Mammary epithelial cell (primary cell): ENCODE measurements at regions of chr4 and their contacts with region 1.

Region 1: GRCh38 chr4:169069972-169070902 is 60.2 kb upstream of the CBR4 start:
- DNase-seq: peak; percentile 99
- H3K4me3 ChIP-seq: peak overlapping the region; percentile 11 to 18 (median 12)
- H3K27ac ChIP-seq: peak overlapping the region; percentile 94
- H3K4me1 ChIP-seq: peaks cover 41% of the 10 kb centered on the region
- H3K27me3 ChIP-seq: no peaks in the 10 kb centered on the region
- CTCF ChIP-seq: no peak

Region 2: GRCh38 chr4:168797176-168797575 is 273.1 kb before region 1 on chr4:
- CTCF ChIA-PET with region 1: no interaction called
- dilution Hi-C with region 1: no loop called
- in situ Hi-C with region 1: no loop called
- intact Hi-C with region 1: no loop called
- DNase-seq: peak; percentile 84
- H3K4me3 ChIP-seq: no peak overlapping the region
- H3K27ac ChIP-seq: peak overlapping the region; percentile 87
- H3K4me1 ChIP-seq: peaks cover 28% of the 10 kb centered on the region
- H3K27me3 ChIP-seq: no peaks in the 10 kb centered on the region
- CTCF ChIP-seq: no peak

Region 3: DNA sequence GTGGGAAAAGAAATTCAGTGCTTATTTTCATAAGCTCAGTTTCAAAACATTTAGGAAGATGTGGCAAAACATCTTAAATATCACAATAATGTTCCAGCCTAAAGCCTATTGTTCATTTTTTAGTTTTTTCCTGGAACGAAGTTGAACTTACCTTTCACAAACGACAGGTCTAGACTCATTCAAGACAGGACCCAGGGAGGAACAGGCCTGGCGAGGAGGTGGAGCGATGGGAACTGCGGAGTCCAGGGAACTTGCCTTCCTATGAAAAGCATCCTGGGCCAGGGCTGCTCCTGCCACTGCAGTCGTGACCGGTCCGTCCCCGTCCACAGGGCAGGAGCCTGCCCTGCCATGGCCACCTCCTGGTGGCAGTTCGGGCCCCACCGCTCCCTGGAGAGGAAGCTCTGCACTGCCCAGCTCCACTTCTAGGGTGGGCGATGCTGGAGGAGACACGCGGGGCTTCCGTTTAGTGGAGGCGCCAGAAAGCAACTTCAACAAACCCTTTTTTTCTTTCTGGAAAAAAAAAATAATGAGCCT is 36.5 kb after region 1 on chr4:
- CTCF ChIA-PET with region 1: no interaction called
- dilution Hi-C with region 1: loop called (anchors 5 kb)
- in situ Hi-C with region 1: no loop called
- intact Hi-C with region 1: no loop called
- DNase-seq: no peak
- H3K4me3 ChIP-seq: no peak overlapping the region
- H3K27ac ChIP-seq: no peak overlapping the region
- H3K4me1 ChIP-seq: peaks cover 22% of the 10 kb centered on the region
- H3K27me3 ChIP-seq: no peaks in the 10 kb centered on the region
- CTCF ChIP-seq: no peak

Region 4: DNA sequence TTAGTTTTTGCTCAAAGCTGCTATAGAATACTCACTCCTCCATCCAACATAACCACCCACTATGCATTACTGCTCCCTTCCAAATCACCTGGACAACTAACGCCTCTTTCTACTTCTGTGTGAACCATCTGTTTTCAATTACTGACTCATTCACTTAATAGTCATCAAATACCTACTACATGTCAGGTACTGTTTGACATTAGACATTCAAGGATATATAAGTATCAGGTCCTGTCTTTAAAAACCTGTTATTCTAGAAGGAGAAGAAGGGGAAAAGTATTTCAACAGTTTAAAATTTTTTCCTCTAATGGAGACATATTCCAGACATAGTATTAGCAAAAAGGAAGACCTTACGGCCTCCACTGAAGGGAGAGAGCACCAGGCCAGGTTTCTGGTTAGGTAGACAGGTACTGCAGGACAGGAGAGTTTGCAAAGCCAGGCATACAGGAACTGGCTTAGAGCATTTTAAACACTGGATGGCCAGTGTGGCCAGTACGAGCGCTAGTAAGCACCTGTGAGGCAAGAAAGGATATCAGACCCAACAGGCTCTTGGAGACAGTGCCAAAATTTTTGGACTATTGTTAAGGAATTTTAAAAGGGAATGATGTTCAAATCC is 161.5 kb after region 1 on chr4:
- CTCF ChIA-PET with region 1: no interaction called
- dilution Hi-C with region 1: no loop called
- in situ Hi-C with region 1: no loop called
- intact Hi-C with region 1: loop called (anchors 1 kb)
- DNase-seq: peak; percentile 89
- H3K4me3 ChIP-seq: no peak overlapping the region
- H3K27ac ChIP-seq: peak overlapping the region; percentile 80
- H3K4me1 ChIP-seq: peaks cover 63% of the 10 kb centered on the region
- H3K27me3 ChIP-seq: no peaks in the 10 kb centered on the region
- CTCF ChIP-seq: no peak